Astrocyte of the cerebellum (primary cell): ENCODE measurements at regions of chr9 and their contacts with region 1.

Region 1: GRCh38 chr9:123349691-123350480 is 6.1 kb upstream of the CRB2 start:
- DNase-seq: peak; percentile 18
- H3K4me3 ChIP-seq: no peak overlapping the region
- CTCF ChIP-seq: peak; percentile 98

Region 2: GRCh38 chr9:122988919-122989621 is 360.8 kb before region 1 on chr9:
- in situ Hi-C with region 1: loop called (anchors 10 kb)
- DNase-seq: no peak
- H3K4me3 ChIP-seq: no peak overlapping the region
- CTCF ChIP-seq: no peak

Region 3: GRCh38 chr9:123107639-123108285 is 242.1 kb before region 1 on chr9:
- in situ Hi-C with region 1: loop called (anchors 5 kb)
- DNase-seq: no peak
- H3K4me3 ChIP-seq: no peak overlapping the region
- CTCF ChIP-seq: no peak

Region 4: GRCh38 chr9:123299558-123300126 is 50.2 kb before region 1 on chr9:
- in situ Hi-C with region 1: loop called (anchors 10 kb)
- DNase-seq: no peak
- H3K4me3 ChIP-seq: no peak overlapping the region
- CTCF ChIP-seq: no peak

Region 5: DNA sequence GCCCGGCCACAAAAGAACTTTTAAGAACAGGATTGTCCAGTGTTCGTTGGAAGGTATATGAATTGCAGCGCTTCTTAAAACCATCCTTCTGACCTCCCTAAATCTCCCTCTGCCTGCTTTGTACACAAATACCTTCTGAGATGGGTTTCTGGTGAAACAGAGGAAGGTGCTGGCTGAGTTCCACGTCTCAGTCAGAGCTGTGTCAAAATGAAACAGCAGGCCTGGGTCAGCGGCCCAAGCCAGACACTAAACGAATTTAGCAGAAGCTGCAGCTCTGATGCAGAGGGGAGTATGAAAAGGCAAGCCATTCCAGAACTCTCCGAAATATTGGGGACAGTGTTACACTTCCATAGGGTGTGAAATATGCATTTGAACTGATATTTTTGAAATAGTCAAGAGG is 31.7 kb before region 1 on chr9:
- in situ Hi-C with region 1: no loop called
- DNase-seq: no peak
- H3K4me3 ChIP-seq: no peak overlapping the region
- CTCF ChIP-seq: no peak